ENCODE measurements at regions of chr17 and their contacts with region 1.

Region 1: GRCh38 chr17:40474419-40475002 is 26.9 kb downstream of the TNS4 start:
- H3K4me3 ChIP-seq: no peak overlapping the region
- H3K27ac ChIP-seq: no peak overlapping the region
- H3K4me1 ChIP-seq: no peaks in the 10 kb centered on the region; the same call in 1 of the 2 replicates
- CTCF ChIP-seq: no peak

Region 2: GRCh38 chr17:40417609-40418427 is 56.7 kb before region 1 on chr17 and contains the start of gene TOP2A:
- CTCF ChIA-PET with region 1: interaction called, 26 read pairs
- POLR2A ChIA-PET with region 1: interaction called, 22 read pairs
- H3K4me3 ChIP-seq: peak within 1 kb of the TSS; percentile 96
- H3K27ac ChIP-seq: peak within 1 kb of the TSS; percentile 94
- H3K4me1 ChIP-seq: peaks cover 3% of the 10 kb centered on the region
- CTCF ChIP-seq: 0 out of 2 replicates have a peak, but pooled peaks have one; percentile 5

Region 3: GRCh38 chr17:40443583-40444327 is 30.8 kb before region 1 on chr17:
- CTCF ChIA-PET with region 1: interaction called, 52 read pairs
- POLR2A ChIA-PET with region 1: interaction called, 7 read pairs
- H3K4me3 ChIP-seq: peak overlapping the region; percentile 16
- H3K27ac ChIP-seq: peak overlapping the region; percentile 46; the same call in 1 of the 2 replicates
- H3K4me1 ChIP-seq: no peaks in the 10 kb centered on the region; the same call in 1 of the 2 replicates
- CTCF ChIP-seq: peak; percentile 76

Region 4: DNA sequence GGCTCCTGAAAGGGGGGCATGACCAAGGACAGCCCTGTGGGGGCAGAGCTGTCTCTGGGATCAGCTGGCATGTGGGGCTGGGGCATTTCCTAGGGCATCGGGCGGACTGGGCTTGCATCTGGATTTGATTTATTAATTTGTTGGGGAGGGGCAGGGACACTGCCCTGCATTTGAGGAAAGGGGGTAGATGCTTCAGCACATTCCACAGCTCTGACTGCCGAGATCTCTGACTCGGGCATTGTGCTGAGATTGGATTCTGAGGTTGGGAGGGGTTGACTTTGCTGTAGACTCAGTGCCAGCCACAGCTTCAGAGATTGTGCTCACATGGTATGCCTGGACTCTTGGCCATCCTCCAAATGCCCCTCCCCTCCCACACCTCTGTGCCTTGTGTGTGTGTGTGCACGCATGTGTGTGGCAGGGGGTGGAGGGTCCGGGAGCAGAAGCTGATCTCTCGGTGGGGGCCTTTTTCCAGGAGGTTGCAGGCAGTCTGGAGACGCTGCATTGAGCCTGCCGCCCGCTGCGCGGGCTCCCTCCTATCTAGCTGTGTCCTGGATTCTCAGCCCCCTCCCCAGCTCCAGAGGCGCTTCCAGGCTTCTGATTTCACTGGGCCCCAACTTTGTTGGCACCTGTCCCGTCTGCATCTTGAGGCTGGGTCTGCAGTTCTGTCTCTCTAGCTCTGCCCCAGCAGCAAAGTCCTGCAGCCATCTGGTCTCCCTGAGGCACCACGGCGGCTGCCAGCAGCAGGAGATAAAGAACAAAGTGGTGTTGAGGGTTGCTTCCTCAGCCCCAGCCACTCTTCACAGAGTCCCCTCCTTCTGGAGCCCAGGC is 16.3 kb before region 1 on chr17:
- CTCF ChIA-PET with region 1: interaction called, 57 read pairs
- POLR2A ChIA-PET with region 1: interaction called, 3 read pairs
- H3K4me3 ChIP-seq: no peak overlapping the region
- H3K27ac ChIP-seq: no peak overlapping the region
- H3K4me1 ChIP-seq: peaks cover 8% of the 10 kb centered on the region; the same call in 1 of the 2 replicates
- CTCF ChIP-seq: no peak

Region 5: GRCh38 chr17:40499551-40500174 is 25.2 kb after region 1 on chr17:
- CTCF ChIA-PET with region 1: interaction called, 33 read pairs
- POLR2A ChIA-PET with region 1: interaction called, 8 read pairs
- H3K4me3 ChIP-seq: no peak overlapping the region
- H3K27ac ChIP-seq: no peak overlapping the region
- H3K4me1 ChIP-seq: no peaks in the 10 kb centered on the region; the same call in 1 of the 2 replicates
- CTCF ChIP-seq: no peak

Region 6: GRCh38 chr17:40522250-40522952 is 47.9 kb after region 1 on chr17:
- CTCF ChIA-PET with region 1: interaction called, 104 read pairs
- POLR2A ChIA-PET with region 1: no interaction called
- H3K4me3 ChIP-seq: no peak overlapping the region
- H3K27ac ChIP-seq: no peak overlapping the region
- H3K4me1 ChIP-seq: no peaks in the 10 kb centered on the region
- CTCF ChIP-seq: no peak

Region 7: GRCh38 chr17:40707720-40708119 is 233.2 kb after region 1 on chr17:
- CTCF ChIA-PET with region 1: no interaction called
- POLR2A ChIA-PET with region 1: no interaction called
- H3K4me3 ChIP-seq: no peak overlapping the region
- H3K27ac ChIP-seq: no peak overlapping the region
- H3K4me1 ChIP-seq: no peaks in the 10 kb centered on the region
- CTCF ChIP-seq: no peak